ENCODE measurements at regions of chr18 and their contacts with region 1.

Region 1: DNA sequence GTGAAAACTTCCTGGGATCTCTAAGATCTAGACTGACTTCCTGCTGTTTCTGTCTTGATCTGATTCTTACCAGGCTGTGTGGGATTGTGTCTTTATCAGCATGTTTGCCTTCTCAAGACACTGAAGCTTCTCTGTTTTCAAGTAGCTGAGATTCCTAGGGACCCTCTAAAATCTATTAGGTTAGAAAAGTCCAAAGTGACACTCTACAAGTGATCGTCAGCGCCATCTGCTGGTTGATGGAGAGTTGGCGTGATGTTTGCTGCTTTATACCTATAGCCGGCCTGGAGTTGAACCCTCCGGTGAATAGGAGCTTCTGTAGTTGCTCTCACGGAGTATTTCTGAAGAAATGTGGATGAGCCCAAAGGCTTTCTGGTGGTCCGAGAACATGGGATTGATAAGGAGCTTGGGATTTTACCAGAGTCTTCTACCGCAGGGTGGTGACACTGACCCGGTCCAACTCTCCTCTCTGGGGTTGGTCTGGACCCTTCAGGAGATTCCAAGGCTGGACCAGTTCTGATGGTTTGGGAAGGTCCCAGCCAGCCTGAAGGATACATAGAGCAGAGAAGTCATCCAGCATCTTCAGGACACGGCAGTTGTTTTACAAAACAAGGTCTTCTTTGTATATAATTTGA is 96.0 kb upstream of the TTC39C start:
- DNase-seq: peak; percentile 83
- H3K4me3 Mint-ChIP-seq: no peak overlapping the region
- H3K27ac Mint-ChIP-seq: no peak overlapping the region
- H3K4me1 Mint-ChIP-seq: peaks cover 16% of the 10 kb centered on the region
- H3K27me3 Mint-ChIP-seq: no peaks in the 10 kb centered on the region

Region 2: DNA sequence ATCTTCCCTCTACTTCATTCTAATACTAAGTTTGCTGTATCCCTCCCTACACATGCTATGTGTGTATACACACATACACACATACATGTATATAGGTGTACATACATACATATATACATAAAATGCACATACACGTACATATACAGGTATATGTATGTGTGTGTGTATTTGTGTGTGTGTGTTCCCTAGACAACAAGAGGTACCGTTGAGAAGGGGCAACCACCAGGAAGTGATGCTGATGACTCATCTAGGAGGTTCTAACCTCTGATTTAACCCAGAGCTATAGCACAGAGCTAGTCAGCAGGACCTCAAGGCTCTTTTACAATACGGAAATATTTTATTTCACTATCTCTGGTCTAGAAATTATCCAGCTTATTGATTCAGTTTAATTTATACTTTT is 90.1 kb before region 1 on chr18:
- CTCF ChIA-PET with region 1: interaction called, 13 read pairs
- POLR2A ChIA-PET with region 1: no interaction called
- intact Hi-C with region 1: loop called (anchors 2 kb)
- DNase-seq: peak; percentile 59
- H3K4me3 Mint-ChIP-seq: no peak overlapping the region
- H3K27ac Mint-ChIP-seq: peak overlapping the region; percentile 15
- H3K4me1 Mint-ChIP-seq: peaks cover 33% of the 10 kb centered on the region
- H3K27me3 Mint-ChIP-seq: peaks cover under 1% of the 10 kb centered on the region

Region 3: GRCh38 chr18:23902396-23902795 is 16.1 kb before region 1 on chr18:
- CTCF ChIA-PET with region 1: interaction called, 16 read pairs
- POLR2A ChIA-PET with region 1: no interaction called
- intact Hi-C with region 1: no loop called
- DNase-seq: no peak
- H3K4me3 Mint-ChIP-seq: no peak overlapping the region
- H3K27ac Mint-ChIP-seq: no peak overlapping the region
- H3K4me1 Mint-ChIP-seq: peaks cover 4% of the 10 kb centered on the region
- H3K27me3 Mint-ChIP-seq: peaks cover 2% of the 10 kb centered on the region

Region 4: GRCh38 chr18:23943104-23943503 is 24.6 kb after region 1 on chr18:
- CTCF ChIA-PET with region 1: interaction called, 14 read pairs
- POLR2A ChIA-PET with region 1: no interaction called
- intact Hi-C with region 1: no loop called
- DNase-seq: peak; percentile 78
- H3K4me3 Mint-ChIP-seq: peak overlapping the region; percentile 13
- H3K27ac Mint-ChIP-seq: no peak overlapping the region
- H3K4me1 Mint-ChIP-seq: peaks cover 36% of the 10 kb centered on the region
- H3K27me3 Mint-ChIP-seq: peaks cover 8% of the 10 kb centered on the region

Region 5: GRCh38 chr18:24176727-24177416 is 258.4 kb after region 1 on chr18:
- CTCF ChIA-PET with region 1: no interaction called
- POLR2A ChIA-PET with region 1: no interaction called
- intact Hi-C with region 1: no loop called
- DNase-seq: peak; percentile 64
- H3K4me3 Mint-ChIP-seq: no peak overlapping the region
- H3K27ac Mint-ChIP-seq: no peak overlapping the region
- H3K4me1 Mint-ChIP-seq: peaks cover 4% of the 10 kb centered on the region
- H3K27me3 Mint-ChIP-seq: no peaks in the 10 kb centered on the region